Activated naive CD8-positive, alpha-beta T cell treated with anti-CD3 and anti-CD28 coated beads, Interleukin-2, amount 10 ng/mL, durations not matched to agents 7 days and 5 days (primary cell): ENCODE measurements at regions of chr12 and their contacts with region 1.

Region 1: DNA sequence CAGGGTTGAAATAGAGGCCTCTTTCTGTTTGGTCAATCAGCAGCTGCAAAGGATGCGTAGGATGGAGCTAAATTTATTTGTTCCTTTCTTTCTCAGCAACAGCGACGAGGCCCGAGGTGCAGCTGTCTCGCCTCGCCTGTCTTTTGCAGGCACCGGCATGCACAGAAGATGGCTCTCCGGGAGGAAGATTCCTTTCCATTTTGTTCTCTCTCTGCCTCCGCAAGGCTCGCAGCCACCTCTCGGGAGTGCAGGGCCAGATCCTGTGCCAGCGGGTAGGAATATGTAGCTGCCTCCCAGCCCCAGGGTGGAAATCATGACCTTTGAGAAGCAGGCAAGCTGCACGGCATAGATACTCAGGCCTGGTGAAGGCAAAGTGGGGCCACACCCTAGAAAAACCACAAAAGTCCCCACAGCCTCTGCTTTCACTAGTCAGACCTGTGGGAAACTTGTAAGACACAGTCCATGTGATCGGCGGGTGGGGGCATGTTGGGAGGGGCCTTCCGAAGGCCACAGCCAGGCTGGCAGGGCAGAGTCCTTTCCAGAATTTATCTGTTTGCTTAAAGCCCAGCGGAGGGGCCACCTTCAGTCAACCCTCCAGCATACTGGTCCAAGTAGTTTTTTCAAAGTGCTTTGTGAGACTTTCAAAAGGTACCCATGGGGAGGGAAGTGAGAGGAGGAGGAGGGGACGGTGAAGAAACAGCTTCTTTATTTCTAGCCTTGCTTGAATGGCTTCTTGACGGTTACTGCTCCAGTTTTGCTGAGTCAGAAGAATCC is at the start of gene MAP1LC3B2:
- DNase-seq: peak; percentile 81
- ATAC-seq: peak; percentile 85
- H3K4me3 Mint-ChIP-seq: peak within 1 kb of the TSS; percentile 67
- H3K27ac Mint-ChIP-seq: peak within 1 kb of the TSS; percentile 97
- H3K4me1 Mint-ChIP-seq: peaks cover 29% of the 10 kb centered on the region
- H3K27me3 Mint-ChIP-seq: peaks cover 3% of the 10 kb centered on the region
- total RNA-seq, gene MAP1LC3B2: 0.85 to 0.89 TPM

Region 2: GRCh38 chr12:116533343-116534251 is 25.8 kb before region 1 on chr12:
- POLR2A ChIA-PET with region 1: interaction called, 13 read pairs
- DNase-seq: peak; percentile 89
- ATAC-seq: peak; percentile 84
- H3K4me3 Mint-ChIP-seq: peak overlapping the region; percentile 95
- H3K27ac Mint-ChIP-seq: peak overlapping the region; percentile 78
- H3K4me1 Mint-ChIP-seq: peaks cover 24% of the 10 kb centered on the region
- H3K27me3 Mint-ChIP-seq: peaks cover 3% of the 10 kb centered on the region

Region 3: DNA sequence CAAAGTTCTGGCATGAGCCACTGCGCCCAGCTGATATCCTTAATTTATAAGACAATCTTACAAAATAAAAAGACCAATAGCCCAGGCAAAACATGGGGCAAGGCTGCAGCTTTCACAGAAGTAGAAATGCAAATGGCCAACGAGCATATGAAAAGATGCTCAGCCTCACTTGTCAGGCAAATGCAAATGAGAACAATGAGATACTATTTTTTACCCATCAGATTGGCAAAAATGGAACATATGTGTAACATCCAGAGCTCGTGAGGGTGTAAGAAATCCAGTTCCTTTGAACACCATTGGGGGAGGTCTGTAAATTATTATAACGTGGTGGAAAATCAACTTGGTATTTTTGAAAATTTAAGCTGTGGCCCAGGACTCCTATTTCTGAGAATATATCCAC is 14.4 kb after region 1 on chr12:
- POLR2A ChIA-PET with region 1: no interaction called
- DNase-seq: no peak
- ATAC-seq: no peak
- H3K4me3 Mint-ChIP-seq: no peak overlapping the region
- H3K27ac Mint-ChIP-seq: no peak overlapping the region
- H3K4me1 Mint-ChIP-seq: no peaks in the 10 kb centered on the region
- H3K27me3 Mint-ChIP-seq: peaks cover 18% of the 10 kb centered on the region

Region 4: GRCh38 chr12:116594325-116595038 is 35.1 kb after region 1 on chr12:
- POLR2A ChIA-PET with region 1: interaction called, 13 read pairs
- DNase-seq: peak; percentile 69
- ATAC-seq: peak; percentile 96
- H3K4me3 Mint-ChIP-seq: peak overlapping the region; percentile 69
- H3K27ac Mint-ChIP-seq: peak overlapping the region; percentile 90
- H3K4me1 Mint-ChIP-seq: peaks cover 37% of the 10 kb centered on the region
- H3K27me3 Mint-ChIP-seq: no peaks in the 10 kb centered on the region

Region 5: GRCh38 chr12:116604951-116605641 is 45.7 kb after region 1 on chr12:
- POLR2A ChIA-PET with region 1: no interaction called
- DNase-seq: no peak
- ATAC-seq: no peak
- H3K4me3 Mint-ChIP-seq: no peak overlapping the region
- H3K27ac Mint-ChIP-seq: no peak overlapping the region
- H3K4me1 Mint-ChIP-seq: peaks cover 13% of the 10 kb centered on the region
- H3K27me3 Mint-ChIP-seq: peaks cover 2% of the 10 kb centered on the region

Region 6: DNA sequence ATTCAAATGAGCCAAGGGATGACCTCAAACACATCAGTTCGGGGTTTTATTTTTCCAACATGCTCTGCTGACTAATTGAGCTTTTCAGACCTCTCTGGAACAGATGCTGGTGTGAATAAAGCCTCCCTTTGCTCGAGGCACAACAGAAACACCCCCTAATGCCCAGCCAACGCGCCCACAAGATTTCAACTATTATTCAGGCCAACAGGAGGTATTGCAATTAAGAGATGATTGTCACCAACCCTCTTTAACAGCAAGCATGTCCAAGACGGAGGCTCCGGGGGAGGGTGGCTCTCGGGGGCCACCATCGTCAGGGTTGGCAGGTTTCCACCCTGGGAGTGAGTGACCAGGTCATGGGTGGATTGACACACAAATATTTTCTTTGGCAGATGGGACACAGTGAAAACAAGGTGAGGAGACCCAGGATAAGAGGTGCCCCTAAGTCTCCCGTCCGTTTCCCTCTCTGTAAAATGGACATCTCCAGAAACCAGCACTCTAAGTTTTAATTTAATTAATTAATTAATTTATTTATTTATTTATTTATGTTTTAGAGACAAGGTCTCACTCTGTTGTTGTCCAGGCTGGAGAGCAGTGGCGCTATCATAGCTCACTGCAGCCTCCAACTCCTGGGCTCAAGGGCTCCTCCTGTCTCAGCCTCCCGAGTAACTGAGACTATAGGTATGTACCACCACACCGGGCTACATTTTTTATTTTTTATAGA is 56.0 kb after region 1 on chr12:
- POLR2A ChIA-PET with region 1: no interaction called
- DNase-seq: no peak
- ATAC-seq: no peak
- H3K4me3 Mint-ChIP-seq: no peak overlapping the region
- H3K27ac Mint-ChIP-seq: no peak overlapping the region
- H3K4me1 Mint-ChIP-seq: peaks cover 1% of the 10 kb centered on the region
- H3K27me3 Mint-ChIP-seq: peaks cover 2% of the 10 kb centered on the region